ENCODE measurements at regions of chr17 and their contacts with region 1.

Region 1: GRCh38 chr17:59440784-59441441 is 109.5 kb downstream of the YPEL2 start:
- DNase-seq: peak; percentile 86
- ATAC-seq: peak; percentile 96
- H3K4me3 ChIP-seq: no peak overlapping the region
- H3K27ac ChIP-seq: peak overlapping the region; percentile 48
- H3K4me1 ChIP-seq: peaks cover 25% of the 10 kb centered on the region
- H3K27me3 ChIP-seq: no peaks in the 10 kb centered on the region
- CTCF ChIP-seq: peak; percentile 86

Region 2: GRCh38 chr17:59311130-59311920 is 129.6 kb before region 1 on chr17:
- intact Hi-C with region 1: loop called (anchors 10 kb)
- DNase-seq: no peak
- ATAC-seq: peak; percentile 94 to 95
- H3K4me3 ChIP-seq: no peak overlapping the region
- H3K27ac ChIP-seq: no peak overlapping the region
- H3K4me1 ChIP-seq: no peaks in the 10 kb centered on the region
- H3K27me3 ChIP-seq: no peaks in the 10 kb centered on the region
- CTCF ChIP-seq: peak; percentile 86

Region 3: DNA sequence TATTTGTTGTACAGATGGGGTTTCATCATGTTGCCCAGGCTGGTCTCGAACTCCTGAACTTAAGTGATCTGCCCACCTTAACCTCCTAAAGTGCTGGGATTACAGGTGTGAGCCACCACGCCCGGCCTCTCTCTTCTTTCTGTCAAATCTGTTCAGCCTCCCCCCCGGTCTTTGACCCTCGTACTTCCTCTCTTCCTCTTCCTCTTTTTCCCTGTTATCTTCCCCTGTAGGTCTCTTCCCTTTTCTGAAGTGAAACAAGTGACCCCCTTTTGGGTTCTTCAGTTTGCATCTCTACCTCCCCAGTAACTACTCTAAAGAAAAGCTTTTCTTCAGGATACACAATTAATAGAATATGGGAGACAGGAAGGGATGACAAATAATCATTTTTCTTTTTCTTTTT is 92.8 kb after region 1 on chr17:
- intact Hi-C with region 1: no loop called
- DNase-seq: no peak
- ATAC-seq: no peak
- H3K4me3 ChIP-seq: no peak overlapping the region
- H3K27ac ChIP-seq: no peak overlapping the region
- H3K4me1 ChIP-seq: no peaks in the 10 kb centered on the region
- H3K27me3 ChIP-seq: no peaks in the 10 kb centered on the region
- CTCF ChIP-seq: no peak

Measured in lower lobe of right lung (tissue), 2 donors.